ENCODE measurements at regions of chr9 and their contacts with region 1.

Region 1: GRCh38 chr9:132944302-132945185 is at the start of gene TSC1:
- DNase-seq: peak; percentile 95 to 99 (median 98)
- ATAC-seq: peak; percentile 88 to 92 (median 89)
- H3K4me3 ChIP-seq: peak within 1 kb of the TSS; percentile 79 to 81
- H3K4me3 Mint-ChIP-seq: peak within 1 kb of the TSS; percentile 94 to 97 (median 95)
- H3K27ac ChIP-seq: peak within 1 kb of the TSS; percentile 94
- H3K27ac Mint-ChIP-seq: peak within 1 kb of the TSS; percentile 100
- H3K4me1 ChIP-seq: peaks cover 10 to 21% of the 10 kb centered on the region in 2 experiments
- H3K4me1 Mint-ChIP-seq: peaks cover 30 to 37% (median 36%) of the 10 kb centered on the region in 3 donors
- H3K27me3 ChIP-seq: no peaks in the 10 kb centered on the region
- H3K27me3 Mint-ChIP-seq: no peaks in the 10 kb centered on the region
- total RNA-seq, gene TSC1: 56.4 to 70.4 (median 59.8) TPM

Region 2: DNA sequence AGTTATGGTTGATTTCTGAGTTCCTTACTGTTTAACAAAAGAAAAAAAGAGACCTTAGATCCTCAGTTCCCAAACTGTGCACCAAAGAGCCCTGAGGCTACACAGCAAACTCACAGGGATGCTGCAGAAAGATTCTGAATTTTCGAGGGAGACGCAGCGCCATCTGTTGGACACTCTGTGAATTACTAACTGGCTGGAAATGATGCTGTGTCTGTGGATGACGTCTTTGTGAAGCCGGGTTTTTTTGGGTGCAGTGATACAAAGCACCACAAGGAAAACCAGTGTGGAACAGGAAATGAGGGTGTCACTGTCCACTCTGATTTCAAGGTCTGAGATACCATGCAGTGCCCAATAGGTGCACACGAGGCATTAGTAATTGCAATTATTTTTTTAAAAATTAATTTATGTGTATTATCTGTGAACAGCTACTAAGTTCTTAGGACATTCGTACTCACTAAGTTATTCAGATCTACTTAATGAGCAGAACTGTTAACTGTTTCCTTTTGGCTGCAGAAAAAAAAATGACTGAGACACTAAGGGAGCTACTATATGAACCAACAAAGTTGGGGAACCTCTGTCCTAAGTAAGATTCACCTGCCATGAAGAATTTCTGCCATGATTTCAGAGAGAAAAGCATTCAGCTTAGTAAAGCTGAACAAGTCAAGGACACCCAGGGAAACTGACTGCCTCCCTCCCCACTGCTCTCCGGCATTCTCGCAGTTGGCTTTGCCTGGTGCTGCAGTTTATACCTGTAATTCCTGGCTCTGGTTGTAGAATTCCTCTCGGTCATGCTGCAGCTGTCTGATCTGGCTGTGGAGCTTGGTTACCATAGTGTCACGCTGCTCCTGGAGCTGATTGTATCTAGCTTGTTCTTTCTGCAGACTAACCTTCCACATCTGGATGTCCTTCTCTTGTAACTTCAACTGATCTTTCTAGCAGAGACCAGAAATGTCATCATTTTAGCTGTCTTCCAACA is 42.4 kb before region 1 on chr9:
- CTCF ChIA-PET with region 1: interaction called in 1 of 2 experiments, 14 read pairs
- POLR2A ChIA-PET with region 1: no interaction called
- DNase-seq: peak; percentile 47 to 90 (median 73)
- ATAC-seq: peak; percentile 83 to 99 (median 86)
- H3K4me3 ChIP-seq: no peak overlapping the region
- H3K4me3 Mint-ChIP-seq: no peak overlapping the region
- H3K27ac ChIP-seq: no peak overlapping the region
- H3K27ac Mint-ChIP-seq: no peak overlapping the region
- H3K4me1 ChIP-seq: no peaks in the 10 kb centered on the region
- H3K4me1 Mint-ChIP-seq: peaks cover 0 to 7% (median 6%) of the 10 kb centered on the region in 3 donors
- H3K27me3 ChIP-seq: no peaks in the 10 kb centered on the region
- H3K27me3 Mint-ChIP-seq: no peaks in the 10 kb centered on the region